Aorta (tissue), 5 donors: ENCODE measurements at regions of chr7 and their contacts with region 1.

Region 1: DNA sequence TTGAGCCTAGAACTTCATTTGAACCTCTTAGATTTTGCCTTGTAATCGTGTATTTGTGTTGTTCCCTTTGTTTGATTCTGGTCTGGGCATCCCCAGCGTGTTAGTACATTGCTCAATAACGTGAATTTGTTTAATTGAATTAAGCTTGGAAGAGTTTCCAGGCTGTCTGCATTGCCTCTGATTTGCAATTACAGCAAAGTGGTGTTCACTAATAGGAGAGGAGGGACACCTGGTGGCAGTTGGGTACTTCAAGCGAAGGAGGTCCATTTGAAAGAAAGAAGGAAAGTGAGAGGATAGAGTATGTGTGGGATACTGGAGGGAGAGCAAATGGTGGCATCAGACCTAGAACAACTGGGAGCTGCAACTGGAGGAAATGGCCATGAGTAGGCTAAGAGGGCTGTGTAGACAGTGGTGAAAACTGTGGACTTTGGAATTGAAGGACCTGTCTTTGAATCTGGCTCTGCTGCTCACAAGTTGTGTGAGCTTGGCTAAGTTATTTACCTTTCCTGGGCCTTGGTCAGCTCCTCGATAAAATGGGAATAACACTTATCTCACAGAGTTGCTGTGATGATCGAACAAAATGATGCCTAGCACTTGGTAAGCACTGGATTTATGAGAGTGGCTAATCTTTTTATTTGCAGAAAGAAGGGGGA is 15.1 kb downstream of the LSMEM1 start:
- DNase-seq: peak in 1 of 2 donors; percentile 57
- ATAC-seq: peak; percentile 87
- H3K4me3 ChIP-seq: no peak overlapping the region
- H3K27ac ChIP-seq: no peak overlapping the region
- H3K4me1 ChIP-seq: no peaks in the 10 kb centered on the region
- H3K27me3 ChIP-seq: no peaks in the 10 kb centered on the region

Region 2: DNA sequence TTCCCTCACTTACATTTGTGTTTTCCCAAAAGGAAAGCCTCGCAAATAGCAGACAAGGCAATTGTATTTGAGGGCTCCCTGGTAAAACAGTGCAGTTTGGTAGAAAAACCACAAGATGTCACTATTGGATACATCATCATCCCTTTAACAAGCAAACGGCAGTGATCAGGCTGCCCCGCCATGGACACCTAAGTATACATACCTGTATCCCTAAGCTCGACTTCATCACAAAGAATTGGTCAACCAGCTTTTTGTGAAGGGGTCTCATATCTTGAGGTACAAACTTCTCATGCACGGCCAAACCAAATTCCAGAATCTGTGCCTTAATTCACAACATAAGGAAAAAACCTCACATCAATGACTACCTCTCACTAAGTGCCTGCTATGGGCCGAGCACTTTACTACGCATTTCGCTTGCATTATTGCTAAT is 754.1 kb before region 1 on chr7:
- intact Hi-C with region 1: loop called (anchors 5 kb)
- DNase-seq: no peak
- ATAC-seq: peak; percentile 72
- H3K4me3 ChIP-seq: no peak overlapping the region
- H3K27ac ChIP-seq: no peak overlapping the region
- H3K4me1 ChIP-seq: no peaks in the 10 kb centered on the region
- H3K27me3 ChIP-seq: no peaks in the 10 kb centered on the region

Region 3: GRCh38 chr7:111763221-111763801 is 732.6 kb before region 1 on chr7:
- intact Hi-C with region 1: loop called (anchors 2 to 5 kb)
- DNase-seq: no peak
- ATAC-seq: peak; percentile 72
- H3K4me3 ChIP-seq: no peak overlapping the region
- H3K27ac ChIP-seq: no peak overlapping the region
- H3K4me1 ChIP-seq: no peaks in the 10 kb centered on the region
- H3K27me3 ChIP-seq: no peaks in the 10 kb centered on the region

Region 4: DNA sequence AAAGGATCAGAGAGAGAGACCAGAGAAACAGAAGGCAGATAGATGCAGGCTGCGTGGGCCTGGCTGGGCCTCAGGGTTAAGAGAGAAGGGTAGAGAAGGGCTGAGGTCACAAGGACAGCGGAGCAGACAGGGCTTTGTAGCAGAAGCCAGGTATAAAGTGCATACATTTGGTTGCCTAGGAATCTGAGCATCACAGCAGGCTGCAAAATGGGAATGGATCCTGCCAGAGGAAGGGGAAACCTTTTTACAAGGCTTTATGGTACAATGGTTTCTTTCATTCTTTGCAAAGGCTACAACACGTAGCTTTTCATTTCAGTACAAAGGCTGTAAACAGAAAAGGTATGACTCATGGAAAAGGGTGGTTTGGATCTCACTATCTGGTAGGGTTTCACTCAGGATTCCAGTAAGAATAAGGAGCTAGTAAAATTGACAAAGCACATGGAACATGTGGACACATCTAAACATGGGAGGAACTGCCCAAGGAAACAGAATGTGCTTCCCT is 564.9 kb before region 1 on chr7:
- intact Hi-C with region 1: loop called in 1 of 2 experiments (anchors 10 kb)
- DNase-seq: no peak
- ATAC-seq: no peak
- H3K4me3 ChIP-seq: no peak overlapping the region
- H3K27ac ChIP-seq: no peak overlapping the region
- H3K4me1 ChIP-seq: no peaks in the 10 kb centered on the region
- H3K27me3 ChIP-seq: no peaks in the 10 kb centered on the region

Region 5: GRCh38 chr7:112331492-112331891 is 164.4 kb before region 1 on chr7:
- intact Hi-C with region 1: no loop called
- DNase-seq: no peak
- ATAC-seq: no peak
- H3K4me3 ChIP-seq: no peak overlapping the region
- H3K27ac ChIP-seq: no peak overlapping the region
- H3K4me1 ChIP-seq: no peaks in the 10 kb centered on the region
- H3K27me3 ChIP-seq: no peaks in the 10 kb centered on the region

Region 6: DNA sequence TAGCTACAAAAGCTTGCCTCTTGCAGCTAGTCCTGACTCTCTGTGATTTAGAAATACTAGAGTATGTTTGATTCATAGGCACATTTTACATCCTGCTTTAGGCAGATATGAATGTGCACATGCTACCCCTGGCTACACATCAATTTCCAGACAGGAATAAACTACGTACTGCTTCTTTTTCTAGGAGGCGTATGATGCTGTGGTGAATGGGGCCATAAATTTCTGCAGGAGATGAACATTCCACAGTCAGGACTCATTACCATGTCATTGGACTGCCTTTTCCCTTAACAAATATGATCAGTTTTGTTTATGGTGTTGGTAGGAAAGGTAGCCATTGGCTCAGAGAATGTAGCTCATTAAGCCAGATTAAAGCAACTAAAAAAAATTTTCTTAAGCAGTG is 95.8 kb before region 1 on chr7:
- intact Hi-C with region 1: loop called in 1 of 2 experiments (anchors 10 kb)
- DNase-seq: no peak
- ATAC-seq: no peak
- H3K4me3 ChIP-seq: no peak overlapping the region
- H3K27ac ChIP-seq: no peak overlapping the region
- H3K4me1 ChIP-seq: no peaks in the 10 kb centered on the region
- H3K27me3 ChIP-seq: no peaks in the 10 kb centered on the region

Region 7: DNA sequence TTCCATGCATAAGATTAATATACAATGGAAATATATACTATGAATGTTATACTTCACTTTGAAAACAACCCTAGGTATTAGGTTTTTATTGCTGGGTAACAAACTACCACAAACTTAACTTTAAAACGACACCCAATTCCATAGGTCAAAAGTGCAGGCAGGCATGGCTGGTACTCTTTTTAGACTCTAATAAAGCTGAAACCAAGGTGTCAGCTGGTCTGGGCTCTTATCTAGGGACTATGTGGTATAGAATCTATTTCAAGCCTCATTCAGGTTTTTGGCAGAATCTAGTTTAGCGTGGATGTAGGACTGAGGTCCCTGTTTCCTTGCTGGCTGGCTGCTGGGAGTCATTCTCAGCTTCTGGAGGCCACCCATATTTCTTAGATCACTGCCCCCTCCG is 359.3 kb after region 1 on chr7:
- intact Hi-C with region 1: no loop called
- DNase-seq: no peak
- ATAC-seq: no peak
- H3K4me3 ChIP-seq: no peak overlapping the region
- H3K27ac ChIP-seq: no peak overlapping the region
- H3K4me1 ChIP-seq: no peaks in the 10 kb centered on the region
- H3K27me3 ChIP-seq: no peaks in the 10 kb centered on the region